Activated CD8-positive, alpha-beta memory T cell treated with anti-CD3 and anti-CD28 coated beads, Interleukin-2, amount 10 ng/mL, durations not matched to agents 7 days and 5 days (primary cell): ENCODE measurements at regions of chr2 and their contacts with region 1.

Region 1: GRCh38 chr2:48461721-48462120 is 68.2 kb upstream of the STON1 start:
- DNase-seq: no peak
- ATAC-seq: no peak
- H3K4me3 Mint-ChIP-seq: no peak overlapping the region
- H3K27ac Mint-ChIP-seq: no peak overlapping the region
- H3K4me1 Mint-ChIP-seq: no peaks in the 10 kb centered on the region
- H3K27me3 Mint-ChIP-seq: no peaks in the 10 kb centered on the region

Region 2: DNA sequence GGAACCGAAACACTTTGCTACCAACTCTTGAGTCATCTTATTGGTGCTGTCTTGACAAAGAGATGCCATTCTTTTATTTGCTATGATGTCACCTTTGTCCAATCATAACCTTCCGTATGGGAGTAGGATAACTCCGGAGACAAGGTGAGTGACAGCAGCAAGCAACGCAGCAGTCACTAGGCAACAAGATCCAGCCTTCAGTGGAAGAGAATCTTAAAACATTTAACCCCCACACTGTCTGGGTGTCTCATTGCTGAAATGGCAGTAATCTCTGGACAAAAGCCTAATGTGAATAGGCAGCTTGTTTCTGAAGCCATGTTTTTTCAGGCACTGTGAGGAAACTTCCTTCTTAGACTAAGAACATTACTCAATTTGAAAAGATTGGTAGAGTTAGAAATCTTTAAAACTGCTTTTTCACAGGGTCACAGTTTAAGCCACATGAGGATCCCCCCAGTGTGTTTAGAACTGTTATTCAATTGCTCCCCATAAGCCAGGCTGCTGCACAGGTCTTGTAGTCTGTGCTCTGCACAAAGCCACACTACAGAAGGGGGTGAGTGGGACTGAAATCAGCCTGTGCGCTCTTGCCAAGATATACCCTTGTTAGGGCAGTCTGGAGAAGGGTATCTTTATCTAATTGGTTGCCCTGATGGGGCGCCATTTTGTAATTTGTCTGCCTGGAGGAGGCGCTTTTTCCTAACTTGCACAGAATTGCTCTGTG is 63.3 kb before region 1 on chr2:
- CTCF ChIA-PET with region 1: no interaction called
- DNase-seq: no peak
- ATAC-seq: no peak
- H3K4me3 Mint-ChIP-seq: no peak overlapping the region
- H3K27ac Mint-ChIP-seq: no peak overlapping the region
- H3K4me1 Mint-ChIP-seq: peaks cover 6% of the 10 kb centered on the region
- H3K27me3 Mint-ChIP-seq: peaks cover 3% of the 10 kb centered on the region

Region 3: GRCh38 chr2:48448274-48449061 is 13.3 kb before region 1 on chr2:
- CTCF ChIA-PET with region 1: interaction called, 15 read pairs
- DNase-seq: peak; percentile 54
- ATAC-seq: peak; percentile 87
- H3K4me3 Mint-ChIP-seq: peak overlapping the region; percentile 66
- H3K27ac Mint-ChIP-seq: peak overlapping the region; percentile 98
- H3K4me1 Mint-ChIP-seq: peaks cover 63% of the 10 kb centered on the region
- H3K27me3 Mint-ChIP-seq: no peaks in the 10 kb centered on the region

Region 4: DNA sequence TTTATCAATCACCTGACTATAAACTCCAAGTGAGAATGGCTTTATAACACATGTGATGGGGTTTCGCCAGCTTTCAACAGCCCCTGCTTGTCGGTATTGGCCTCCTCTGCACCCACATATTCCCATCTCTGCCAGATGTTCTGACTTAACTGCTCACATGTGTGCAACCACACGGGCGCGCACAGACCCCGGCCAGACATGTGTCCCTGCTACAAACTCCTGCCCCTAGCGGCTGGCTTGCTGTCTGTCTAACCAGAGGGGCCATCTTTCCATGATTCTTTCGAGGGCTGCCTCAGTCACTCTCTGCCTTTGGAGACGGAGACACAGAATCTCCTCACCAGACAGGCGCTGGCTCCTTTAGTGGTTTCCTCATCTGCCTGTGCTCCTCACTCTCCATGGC is 83.5 kb after region 1 on chr2:
- CTCF ChIA-PET with region 1: no interaction called
- DNase-seq: no peak
- ATAC-seq: no peak
- H3K4me3 Mint-ChIP-seq: no peak overlapping the region
- H3K27ac Mint-ChIP-seq: no peak overlapping the region
- H3K4me1 Mint-ChIP-seq: no peaks in the 10 kb centered on the region
- H3K27me3 Mint-ChIP-seq: no peaks in the 10 kb centered on the region

Region 5: DNA sequence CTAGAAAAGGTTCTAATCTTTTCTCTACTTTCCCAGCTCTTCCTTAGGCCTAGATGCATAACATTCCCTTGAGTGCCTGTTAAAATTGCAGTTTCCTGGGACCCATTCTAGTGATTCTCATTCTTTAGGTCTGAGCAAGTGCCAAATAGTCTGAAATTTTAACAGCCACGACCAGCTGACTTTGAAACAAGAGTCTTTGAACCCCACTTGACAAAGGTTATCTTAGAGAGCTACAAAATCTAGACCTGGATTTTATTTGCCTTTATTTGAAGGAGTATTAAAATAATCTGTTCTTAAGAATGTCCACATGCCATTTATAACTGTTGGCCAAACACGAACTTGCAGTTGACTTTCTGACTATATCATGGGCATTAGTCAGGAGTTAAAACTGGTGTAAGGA is 404.0 kb after region 1 on chr2:
- CTCF ChIA-PET with region 1: no interaction called
- DNase-seq: no peak
- ATAC-seq: no peak
- H3K4me3 Mint-ChIP-seq: no peak overlapping the region
- H3K27ac Mint-ChIP-seq: no peak overlapping the region
- H3K4me1 Mint-ChIP-seq: no peaks in the 10 kb centered on the region
- H3K27me3 Mint-ChIP-seq: no peaks in the 10 kb centered on the region